ENCODE measurements at regions of chr11 and their contacts with region 1.

Region 1: DNA sequence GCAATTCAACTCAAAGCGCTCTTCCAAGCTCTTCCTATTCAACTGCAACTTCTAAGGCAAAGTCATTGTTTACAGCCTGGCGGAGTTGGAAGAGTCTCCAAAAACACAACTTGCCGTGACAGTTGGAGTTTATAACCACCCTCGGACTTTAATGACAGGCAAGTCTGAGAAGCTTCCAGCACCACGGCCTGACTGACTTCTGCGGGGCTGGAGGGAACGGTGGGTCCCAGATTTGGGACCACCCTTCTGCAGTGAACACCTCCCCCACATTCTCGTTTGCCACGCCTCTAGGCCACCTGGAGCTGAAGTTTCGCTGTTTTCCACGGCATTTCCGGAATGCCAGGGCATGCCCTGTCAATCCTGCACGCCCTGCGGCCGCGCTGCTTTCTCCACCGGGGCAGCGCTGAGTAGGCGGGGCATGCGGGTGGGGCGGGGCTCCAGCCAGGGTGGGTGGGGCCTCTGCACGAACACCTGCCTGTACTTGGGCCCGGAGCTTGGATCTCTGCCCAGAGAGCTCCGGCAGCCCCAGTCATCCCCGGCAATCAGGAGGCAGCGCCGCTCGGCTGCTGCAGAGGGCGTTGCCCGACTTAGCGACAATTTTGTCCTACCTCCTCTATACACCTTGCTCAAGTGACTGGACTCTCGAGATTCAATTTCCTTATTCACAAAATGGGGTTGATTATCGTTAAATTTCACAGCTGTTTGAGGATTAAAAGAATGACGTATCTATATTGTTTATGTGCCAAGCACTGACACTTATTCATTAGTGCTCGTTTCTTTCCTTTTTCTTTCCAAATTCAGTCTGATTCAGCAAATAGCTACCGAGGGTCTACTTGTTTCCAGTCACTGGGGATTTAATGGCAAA is 48.7 kb upstream of the BIRC3 start:
- H3K4me3 ChIP-seq: peak overlapping the region; percentile 25
- H3K27ac ChIP-seq: no peak overlapping the region; the same call in 1 of the 2 replicates
- H3K4me1 ChIP-seq: no peaks in the 10 kb centered on the region
- CTCF ChIP-seq: no peak; the same call in 1 of the 2 replicates

Region 2: GRCh38 chr11:102254045-102254444 is 14.5 kb before region 1 on chr11:
- CTCF ChIA-PET with region 1: interaction called, 21 read pairs
- POLR2A ChIA-PET with region 1: interaction called, 9 read pairs
- H3K4me3 ChIP-seq: no peak overlapping the region
- H3K27ac ChIP-seq: no peak overlapping the region
- H3K4me1 ChIP-seq: no peaks in the 10 kb centered on the region
- CTCF ChIP-seq: no peak

Region 3: DNA sequence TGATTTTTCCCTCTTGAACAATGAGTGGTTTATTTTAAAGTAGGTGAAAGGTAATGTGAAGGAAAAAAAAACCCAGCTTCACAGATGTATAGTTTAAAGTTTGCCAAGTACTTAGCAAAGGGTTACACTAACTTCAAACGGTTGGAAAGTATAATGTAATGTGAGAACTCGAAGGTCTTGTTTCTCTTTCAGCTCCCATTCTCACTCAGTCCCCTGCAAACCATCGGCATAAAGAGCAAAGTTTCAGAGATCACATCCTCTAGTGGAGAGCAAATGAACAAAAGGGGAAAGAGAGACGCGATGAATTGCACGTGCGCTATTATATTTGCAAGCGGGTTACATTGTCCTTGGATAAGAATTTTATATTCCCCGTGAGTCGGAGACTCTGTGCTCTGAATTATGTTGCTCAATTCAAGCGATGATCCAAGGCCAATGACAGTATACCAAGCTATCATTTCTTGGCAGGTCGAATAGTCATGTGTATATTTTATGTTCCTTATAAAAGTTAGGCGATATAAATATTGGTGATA is 11.1 kb after region 1 on chr11:
- CTCF ChIA-PET with region 1: interaction called, 25 read pairs
- POLR2A ChIA-PET with region 1: interaction called, 5 read pairs
- H3K4me3 ChIP-seq: no peak overlapping the region
- H3K27ac ChIP-seq: no peak overlapping the region
- H3K4me1 ChIP-seq: no peaks in the 10 kb centered on the region; the same call in 1 of the 2 replicates
- CTCF ChIP-seq: no peak

Region 4: GRCh38 chr11:102287964-102288724 is 19.6 kb after region 1 on chr11:
- CTCF ChIA-PET with region 1: interaction called, 23 read pairs
- POLR2A ChIA-PET with region 1: no interaction called
- H3K4me3 ChIP-seq: no peak overlapping the region
- H3K27ac ChIP-seq: no peak overlapping the region
- H3K4me1 ChIP-seq: no peaks in the 10 kb centered on the region
- CTCF ChIP-seq: peak; percentile 42; the same call in 1 of the 2 replicates